Calu3 (cell line): ENCODE measurements at regions of chr1 and their contacts with region 1.

Region 1: DNA sequence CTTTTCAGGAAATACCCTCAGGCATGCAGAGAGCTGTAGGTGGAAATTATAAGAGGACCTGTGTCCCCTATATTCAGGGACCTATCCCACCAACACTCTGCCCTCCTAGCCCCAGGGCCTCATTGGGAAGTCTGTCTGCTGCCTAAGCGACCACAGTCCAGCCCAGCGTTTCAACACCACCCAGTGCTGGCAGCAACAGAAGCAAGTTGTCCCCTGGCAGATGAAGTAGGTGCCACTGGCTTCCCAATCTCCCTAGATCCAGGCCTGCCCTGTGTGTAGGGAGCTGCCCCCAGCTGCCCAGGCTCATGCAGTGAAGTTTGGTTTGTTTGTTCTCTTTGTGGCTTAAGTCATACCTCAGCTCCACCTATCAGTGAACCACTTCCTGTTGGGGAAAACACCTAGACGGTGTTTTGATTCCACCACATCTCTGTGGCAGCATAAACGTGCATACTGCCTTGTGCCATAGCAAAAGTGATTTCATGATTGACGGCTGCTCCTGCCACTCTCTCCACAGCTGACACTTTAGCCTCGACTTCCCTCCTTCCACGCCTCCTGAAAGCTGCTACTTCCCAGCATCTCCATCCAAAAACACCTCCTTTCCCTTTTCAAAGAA is 8.1 kb upstream of the LEFTY1 start:
- DNase-seq: peak; percentile 79
- H3K4me3 Mint-ChIP-seq: no peak overlapping the region
- H3K27ac Mint-ChIP-seq: peak overlapping the region; percentile 77
- H3K4me1 Mint-ChIP-seq: peaks cover 37% of the 10 kb centered on the region
- H3K27me3 Mint-ChIP-seq: no peaks in the 10 kb centered on the region
- CTCF ChIP-seq: no peak

Region 2: DNA sequence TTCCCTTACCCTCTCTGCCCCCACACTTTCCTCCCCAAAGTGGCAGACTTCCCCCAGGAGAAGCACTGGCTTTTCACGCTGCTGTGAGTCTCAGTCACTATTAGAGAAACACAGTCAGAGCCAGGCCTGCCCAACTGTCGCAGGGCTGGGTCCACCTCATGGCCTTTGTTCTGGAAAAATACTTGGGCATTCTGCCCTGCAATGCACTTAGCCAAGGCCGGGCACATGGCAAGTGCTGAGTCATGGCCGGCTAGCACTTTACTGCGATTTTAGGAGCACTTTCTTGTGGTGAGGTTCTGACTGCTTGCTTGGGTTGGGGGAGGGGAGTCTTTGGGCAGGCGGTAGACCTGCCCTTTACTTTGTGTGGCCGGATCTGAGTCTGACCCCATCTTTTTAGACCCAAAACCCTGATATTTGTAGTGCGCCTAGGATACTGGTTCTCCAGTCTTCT is 79.4 kb before region 1 on chr1:
- CTCF ChIA-PET with region 1: no interaction called
- intact Hi-C with region 1: no loop called
- DNase-seq: no peak
- H3K4me3 Mint-ChIP-seq: no peak overlapping the region
- H3K27ac Mint-ChIP-seq: peak overlapping the region; percentile 74
- H3K4me1 Mint-ChIP-seq: peaks cover 13% of the 10 kb centered on the region
- H3K27me3 Mint-ChIP-seq: no peaks in the 10 kb centered on the region
- CTCF ChIP-seq: no peak

Region 3: GRCh38 chr1:225875044-225875814 is 21.8 kb before region 1 on chr1:
- CTCF ChIA-PET with region 1: interaction called, 15 read pairs
- intact Hi-C with region 1: no loop called
- DNase-seq: peak; percentile 88
- H3K4me3 Mint-ChIP-seq: peak overlapping the region; percentile 67
- H3K27ac Mint-ChIP-seq: peak overlapping the region; percentile 68
- H3K4me1 Mint-ChIP-seq: peaks cover 78% of the 10 kb centered on the region
- H3K27me3 Mint-ChIP-seq: no peaks in the 10 kb centered on the region
- CTCF ChIP-seq: no peak

Region 4: GRCh38 chr1:225881969-225882693 is 14.9 kb before region 1 on chr1 and contains the start of gene TMEM63A:
- CTCF ChIA-PET with region 1: interaction called, 15 read pairs
- intact Hi-C with region 1: no loop called
- DNase-seq: peak; percentile 96
- H3K4me3 Mint-ChIP-seq: peak within 1 kb of the TSS; percentile 67
- H3K27ac Mint-ChIP-seq: peak within 1 kb of the TSS; percentile 85
- H3K4me1 Mint-ChIP-seq: peaks cover 62% of the 10 kb centered on the region
- H3K27me3 Mint-ChIP-seq: no peaks in the 10 kb centered on the region
- CTCF ChIP-seq: peak; percentile 11
- total RNA-seq, gene TMEM63A: 253 and 303 TPM in 2 replicates

Region 5: DNA sequence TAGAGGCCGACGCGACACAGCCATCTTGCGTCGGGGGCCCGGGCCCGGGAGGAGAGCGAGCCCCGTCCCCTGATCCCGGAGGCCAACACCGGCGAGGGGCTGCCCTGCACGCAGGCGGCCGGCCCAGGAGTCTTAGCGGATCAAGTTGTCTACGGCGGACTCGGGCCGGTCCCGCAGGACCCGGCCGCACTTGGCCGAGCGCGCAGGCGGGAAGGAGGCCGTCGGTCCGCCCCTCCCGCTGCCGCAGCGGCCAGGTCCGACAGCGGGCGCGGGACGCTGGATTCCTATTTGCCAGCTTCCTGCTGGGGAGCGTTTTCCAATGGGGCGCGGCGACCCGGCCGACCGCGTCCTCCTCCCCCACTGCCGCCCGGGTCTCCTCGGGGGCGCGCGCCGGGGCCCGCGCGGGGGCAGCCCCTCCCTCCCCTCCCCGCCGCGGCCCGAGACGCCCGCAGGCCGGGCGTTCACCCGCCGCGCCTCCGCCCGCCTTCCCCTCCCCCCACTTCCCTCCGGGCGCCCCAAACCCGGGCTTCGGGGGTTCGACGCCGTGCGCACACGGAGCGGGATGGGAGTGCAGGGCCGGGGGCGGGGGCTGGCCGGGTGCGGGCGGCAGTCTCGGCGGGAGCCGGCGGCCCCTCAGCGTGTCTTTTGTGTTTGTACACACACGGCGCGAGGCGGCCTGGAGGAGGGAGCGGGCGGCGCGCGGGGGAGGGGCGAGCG is 165.0 kb after region 1 on chr1:
- CTCF ChIA-PET with region 1: no interaction called
- intact Hi-C with region 1: no loop called
- DNase-seq: peak; percentile 92
- H3K4me3 Mint-ChIP-seq: peak overlapping the region; percentile 89
- H3K27ac Mint-ChIP-seq: peak overlapping the region; percentile 94
- H3K4me1 Mint-ChIP-seq: peaks cover 39% of the 10 kb centered on the region
- H3K27me3 Mint-ChIP-seq: no peaks in the 10 kb centered on the region
- CTCF ChIP-seq: no peak